ENCODE measurements at regions of chr4 and their contacts with region 1.

Region 1: DNA sequence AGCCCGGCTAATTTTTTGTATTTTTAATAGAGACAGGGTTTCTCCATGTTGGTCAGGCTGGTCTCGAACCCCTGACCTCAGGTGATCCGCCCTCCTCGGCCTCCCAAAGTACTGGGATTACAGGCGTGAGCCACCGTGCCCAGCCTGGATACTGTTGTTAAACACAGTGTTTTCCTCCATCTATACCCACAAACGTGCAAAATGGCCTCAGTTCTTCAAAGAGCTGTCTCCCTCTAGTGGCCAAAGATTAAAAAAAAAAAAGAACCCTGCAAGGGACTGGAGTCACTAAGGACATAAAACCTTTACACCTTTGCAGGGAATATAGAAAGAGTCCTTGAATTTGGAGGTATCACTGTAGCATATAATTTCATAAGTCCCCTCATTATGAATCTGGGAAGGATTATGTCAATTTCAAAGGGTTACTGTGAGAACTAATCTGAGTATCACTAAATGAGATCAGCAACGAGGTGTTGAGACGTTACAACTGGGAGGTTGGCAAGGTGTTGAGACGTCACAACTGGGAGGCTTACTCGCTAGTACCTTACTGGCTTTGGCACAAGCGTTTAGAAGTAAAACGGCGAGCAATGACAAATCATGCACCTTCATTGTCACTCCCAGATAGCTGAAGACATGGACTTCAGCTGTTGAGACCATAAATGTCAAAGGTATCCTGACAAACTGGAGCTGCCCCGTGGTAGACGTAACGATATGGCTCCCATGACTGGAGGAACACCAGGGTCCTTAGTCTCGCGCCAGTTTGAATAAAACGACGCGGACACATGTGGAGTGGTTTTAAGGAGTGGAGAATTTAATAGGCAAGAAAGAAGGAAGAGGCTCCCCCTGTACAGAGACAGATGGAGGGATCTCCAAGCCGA is 33.4 kb upstream of the ENPP6 start:
- DNase-seq: peak; percentile 53
- ATAC-seq: peak; percentile 88
- H3K4me3 Mint-ChIP-seq: no peak overlapping the region
- H3K27ac Mint-ChIP-seq: no peak overlapping the region
- H3K4me1 Mint-ChIP-seq: peaks cover 11% of the 10 kb centered on the region
- H3K27me3 Mint-ChIP-seq: peaks cover 4% of the 10 kb centered on the region

Region 2: DNA sequence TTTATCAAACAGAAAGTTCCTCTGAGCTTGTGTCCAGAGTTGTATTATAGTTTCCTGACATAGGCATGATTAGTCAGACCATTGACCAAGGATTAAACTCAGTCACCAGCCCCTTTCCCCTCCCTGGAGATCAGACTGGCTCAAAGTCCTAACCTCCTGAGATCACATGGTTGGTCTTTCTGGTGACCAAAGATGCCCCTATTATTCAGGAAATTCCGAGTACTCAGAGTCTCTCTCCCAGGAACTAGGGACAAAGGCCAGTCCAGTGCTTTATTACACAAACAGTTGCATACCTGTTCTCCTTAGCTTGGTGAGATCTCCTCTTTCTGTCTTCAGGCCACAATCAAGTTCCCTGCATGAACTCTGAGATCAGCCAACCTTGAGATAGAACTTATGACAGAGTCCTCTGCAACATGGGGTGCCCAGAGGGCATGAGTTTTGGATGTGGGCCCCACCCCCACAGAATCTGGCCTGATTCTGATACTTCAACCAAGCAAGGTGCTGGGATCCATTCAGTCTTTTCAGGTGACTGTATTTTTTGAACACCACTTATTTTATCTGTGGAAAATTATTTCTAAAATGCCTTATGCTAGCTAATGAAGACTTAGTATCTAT is 18.7 kb before region 1 on chr4:
- CTCF ChIA-PET with region 1: interaction called, 13 read pairs
- DNase-seq: no peak
- ATAC-seq: no peak
- H3K4me3 Mint-ChIP-seq: no peak overlapping the region
- H3K27ac Mint-ChIP-seq: no peak overlapping the region
- H3K4me1 Mint-ChIP-seq: peaks cover 83% of the 10 kb centered on the region
- H3K27me3 Mint-ChIP-seq: no peaks in the 10 kb centered on the region

Measured in activated CD8-positive, alpha-beta memory T cell treated with anti-CD3 and anti-CD28 coated beads, Interleukin-2, amount 10 ng/mL, durations not matched to agents 7 days and 5 days (primary cell).